GM12878 (cell line): ENCODE measurements at regions of chr11 and their contacts with region 1.

Region 1: GRCh38 chr11:102396708-102397563 is 49.9 kb downstream of the BIRC2 start:
- DNase-seq: no peak
- ATAC-seq: peak; percentile 16; the same call in 2 of the 3 replicates
- H3K4me3 ChIP-seq: no peak overlapping the region
- H3K27ac ChIP-seq: no peak overlapping the region
- H3K4me1 ChIP-seq: peaks cover 5% of the 10 kb centered on the region
- H3K27me3 ChIP-seq: no peaks in the 10 kb centered on the region
- CTCF ChIP-seq: no peak
- EP300 ChIP-seq: no peak
- POLR2A ChIP-seq: no peak
- RAD21 ChIP-seq: no peak

Region 2: GRCh38 chr11:102410382-102410784 is 13.4 kb after region 1 on chr11:
- CTCF ChIA-PET with region 1: interaction called, 91 read pairs
- POLR2A ChIA-PET with region 1: interaction called, 4 read pairs
- RAD21 ChIA-PET with region 1: interaction called, 17 read pairs
- SMC1A ChIA-PET with region 1: interaction called, 28 read pairs
- in situ Hi-C with region 1: no loop called
- intact Hi-C with region 1: no loop called
- DNase-seq: no peak
- ATAC-seq: no peak
- H3K4me3 ChIP-seq: no peak overlapping the region
- H3K27ac ChIP-seq: no peak overlapping the region
- H3K4me1 ChIP-seq: no peaks in the 10 kb centered on the region
- H3K27me3 ChIP-seq: no peaks in the 10 kb centered on the region
- CTCF ChIP-seq: no peak
- EP300 ChIP-seq: no peak
- POLR2A ChIP-seq: no peak
- RAD21 ChIP-seq: no peak

Region 3: GRCh38 chr11:102420547-102420946 is 23.6 kb after region 1 on chr11:
- CTCF ChIA-PET with region 1: interaction called, 4 read pairs
- POLR2A ChIA-PET with region 1: interaction called, 3 read pairs
- RAD21 ChIA-PET with region 1: interaction called, 5 read pairs
- SMC1A ChIA-PET with region 1: interaction called, 15 read pairs
- in situ Hi-C with region 1: no loop called
- intact Hi-C with region 1: no loop called
- DNase-seq: peak; percentile 40
- ATAC-seq: peak; percentile 83
- H3K4me3 ChIP-seq: no peak overlapping the region
- H3K27ac ChIP-seq: no peak overlapping the region
- H3K4me1 ChIP-seq: peaks cover 4% of the 10 kb centered on the region; the same call in 1 of the 2 replicates
- H3K27me3 ChIP-seq: no peaks in the 10 kb centered on the region
- CTCF ChIP-seq: no peak
- EP300 ChIP-seq: no peak
- POLR2A ChIP-seq: no peak
- RAD21 ChIP-seq: no peak

Region 4: DNA sequence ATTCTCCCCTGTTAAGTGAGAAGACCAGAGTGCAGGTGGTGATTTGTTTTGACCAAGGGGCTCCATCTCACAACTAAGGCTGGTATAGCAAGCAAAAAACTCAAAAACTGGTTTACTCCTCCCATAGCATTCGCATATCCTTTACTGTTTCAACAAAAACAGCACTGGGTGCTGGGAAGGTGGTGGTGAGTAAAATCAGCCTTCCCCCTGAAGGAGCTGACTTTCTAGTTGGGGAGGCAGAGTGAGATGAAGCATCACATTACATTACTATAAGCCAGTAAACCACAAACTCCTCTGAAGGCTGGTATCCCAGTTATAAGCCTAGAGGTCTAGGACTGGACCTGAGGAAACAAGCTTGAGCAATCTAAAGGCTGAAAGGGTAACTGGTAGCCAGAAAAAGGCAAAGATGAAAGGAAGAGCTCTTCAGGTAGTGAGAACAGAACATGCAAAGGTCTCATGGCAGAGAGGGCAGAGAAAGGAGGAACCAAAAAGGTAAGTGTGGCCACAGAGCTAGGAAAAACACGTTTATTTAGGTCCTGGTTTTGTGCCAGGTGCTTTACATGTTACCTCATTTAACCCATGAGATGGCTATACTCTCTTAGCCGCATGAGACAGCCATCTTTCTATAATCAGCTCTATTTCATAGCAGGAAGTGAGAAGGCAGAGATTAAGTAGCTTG is 33.4 kb after region 1 on chr11:
- CTCF ChIA-PET with region 1: interaction called, 10 read pairs
- POLR2A ChIA-PET with region 1: no interaction called
- RAD21 ChIA-PET with region 1: interaction called, 11 read pairs
- SMC1A ChIA-PET with region 1: interaction called, 11 read pairs
- in situ Hi-C with region 1: no loop called
- intact Hi-C with region 1: no loop called
- DNase-seq: peak; percentile 99
- ATAC-seq: peak; percentile 90
- H3K4me3 ChIP-seq: peak overlapping the region; percentile 53
- H3K27ac ChIP-seq: peak overlapping the region; percentile 91
- H3K4me1 ChIP-seq: peaks cover 35% of the 10 kb centered on the region
- H3K27me3 ChIP-seq: no peaks in the 10 kb centered on the region
- CTCF ChIP-seq: no peak
- EP300 ChIP-seq: peak; percentile 76 to 82; a peak in 2 of 4 replicates
- POLR2A ChIP-seq: no peak
- RAD21 ChIP-seq: no peak; the same call in 1 of the 2 replicates

Region 5: GRCh38 chr11:102451681-102452460 is 54.9 kb after region 1 on chr11:
- CTCF ChIA-PET with region 1: interaction called, 95 read pairs
- POLR2A ChIA-PET with region 1: interaction called, 3 read pairs
- RAD21 ChIA-PET with region 1: interaction called, 12 read pairs
- SMC1A ChIA-PET with region 1: interaction called, 30 read pairs
- in situ Hi-C with region 1: no loop called
- intact Hi-C with region 1: no loop called
- DNase-seq: no peak
- ATAC-seq: peak; percentile 75
- H3K4me3 ChIP-seq: peak overlapping the region; percentile 75
- H3K27ac ChIP-seq: peak overlapping the region; percentile 79
- H3K4me1 ChIP-seq: peaks cover 17% of the 10 kb centered on the region; the same call in 1 of the 2 replicates
- H3K27me3 ChIP-seq: no peaks in the 10 kb centered on the region
- CTCF ChIP-seq: peak; percentile 27 to 44 (median 35); a peak in 3 of 6 replicates
- EP300 ChIP-seq: no peak
- POLR2A ChIP-seq: peak; percentile 84
- RAD21 ChIP-seq: peak; percentile 20; the same call in 1 of the 2 replicates